Motor neuron (in vitro differentiated cells): ENCODE measurements at regions of chr2 and their contacts with region 1.

Region 1: GRCh38 chr2:144516981-144517865 is 2.7 kb downstream of the ZEB2 start:
- ATAC-seq: peak; percentile 31 to 61 (median 47)
- H3K4me3 ChIP-seq: peak overlapping the region; percentile 65 to 98 (median 94)
- H3K27ac ChIP-seq: peak overlapping the region; percentile 89
- H3K4me1 ChIP-seq: peaks cover 29 to 43% of the 10 kb centered on the region in 2 donors

Region 2: DNA sequence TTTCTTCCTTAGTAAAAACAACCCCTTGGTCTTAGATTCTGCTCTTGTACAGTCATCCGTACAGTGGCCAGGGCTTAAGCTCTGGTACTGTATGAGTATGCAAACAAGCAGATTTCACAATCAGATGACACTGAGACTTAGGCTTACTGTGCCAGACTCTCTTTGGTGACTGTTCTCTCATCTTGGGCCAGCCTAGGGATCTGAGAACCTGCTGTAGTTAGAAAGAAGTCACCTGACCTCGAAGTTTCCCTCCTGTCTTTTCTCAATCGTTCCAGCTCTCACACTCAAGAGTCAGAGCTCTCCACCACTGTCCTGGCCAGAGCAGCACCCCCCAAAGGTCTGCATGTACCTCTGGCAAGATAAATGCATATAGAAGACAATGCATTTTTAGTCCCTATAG is 60.5 kb before region 1 on chr2:
- in situ Hi-C with region 1: loop called in 1 of 9 experiments (anchors 10 kb)
- ATAC-seq: peak in 5 of 8 experiments; percentile 12 to 71 (median 54)
- H3K4me3 ChIP-seq: no peak overlapping the region
- H3K27ac ChIP-seq: no peak overlapping the region
- H3K4me1 ChIP-seq: peaks cover 77 to 84% of the 10 kb centered on the region in 2 donors

Region 3: GRCh38 chr2:144890828-144891227 is 373.6 kb after region 1 on chr2:
- in situ Hi-C with region 1: loop called in 1 of 9 experiments (anchors 25 kb)
- ATAC-seq: peak in 2 of 8 experiments; percentile 41 to 60
- H3K4me3 ChIP-seq: no peak overlapping the region
- H3K27ac ChIP-seq: no peak overlapping the region
- H3K4me1 ChIP-seq: no peaks in the 10 kb centered on the region